ENCODE measurements at regions of chr21 and their contacts with region 1.

Region 1: GRCh38 chr21:36209626-36210171 is 53.1 kb downstream of the DOP1B start:
- DNase-seq: peak; percentile 62
- H3K4me3 Mint-ChIP-seq: no peak overlapping the region
- H3K27ac Mint-ChIP-seq: no peak overlapping the region
- H3K4me1 Mint-ChIP-seq: peaks cover 25% of the 10 kb centered on the region
- H3K27me3 Mint-ChIP-seq: no peaks in the 10 kb centered on the region

Region 2: DNA sequence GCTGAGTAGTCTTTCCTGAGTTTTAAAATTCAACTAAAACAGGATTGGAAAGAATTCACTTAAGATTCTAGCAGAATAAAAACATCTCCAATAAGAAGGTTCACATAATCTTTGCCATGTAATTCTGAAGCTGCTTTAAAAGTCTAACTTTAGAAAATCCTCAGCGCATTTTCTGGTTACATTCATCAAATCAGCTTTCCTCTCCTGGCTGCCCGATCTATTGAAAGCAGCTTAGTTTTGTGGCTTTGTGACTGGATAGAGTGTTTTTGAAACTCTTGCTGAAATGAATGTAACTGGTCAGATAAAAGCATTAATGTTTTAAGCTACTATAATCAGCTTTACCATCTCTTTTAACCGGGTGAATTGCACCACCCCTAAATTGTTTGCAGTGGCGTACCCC is 13.8 kb after region 1 on chr21:
- CTCF ChIA-PET with region 1: interaction called, 13 read pairs
- POLR2A ChIA-PET with region 1: no interaction called
- intact Hi-C with region 1: no loop called
- DNase-seq: no peak
- H3K4me3 Mint-ChIP-seq: no peak overlapping the region
- H3K27ac Mint-ChIP-seq: no peak overlapping the region
- H3K4me1 Mint-ChIP-seq: no peaks in the 10 kb centered on the region
- H3K27me3 Mint-ChIP-seq: no peaks in the 10 kb centered on the region

Measured in activated CD4-positive, alpha-beta memory T cell treated with anti-CD3 and anti-CD28 coated beads for 36 hours (primary cell).